ENCODE measurements at regions of chr19 and their contacts with region 1.

Region 1: DNA sequence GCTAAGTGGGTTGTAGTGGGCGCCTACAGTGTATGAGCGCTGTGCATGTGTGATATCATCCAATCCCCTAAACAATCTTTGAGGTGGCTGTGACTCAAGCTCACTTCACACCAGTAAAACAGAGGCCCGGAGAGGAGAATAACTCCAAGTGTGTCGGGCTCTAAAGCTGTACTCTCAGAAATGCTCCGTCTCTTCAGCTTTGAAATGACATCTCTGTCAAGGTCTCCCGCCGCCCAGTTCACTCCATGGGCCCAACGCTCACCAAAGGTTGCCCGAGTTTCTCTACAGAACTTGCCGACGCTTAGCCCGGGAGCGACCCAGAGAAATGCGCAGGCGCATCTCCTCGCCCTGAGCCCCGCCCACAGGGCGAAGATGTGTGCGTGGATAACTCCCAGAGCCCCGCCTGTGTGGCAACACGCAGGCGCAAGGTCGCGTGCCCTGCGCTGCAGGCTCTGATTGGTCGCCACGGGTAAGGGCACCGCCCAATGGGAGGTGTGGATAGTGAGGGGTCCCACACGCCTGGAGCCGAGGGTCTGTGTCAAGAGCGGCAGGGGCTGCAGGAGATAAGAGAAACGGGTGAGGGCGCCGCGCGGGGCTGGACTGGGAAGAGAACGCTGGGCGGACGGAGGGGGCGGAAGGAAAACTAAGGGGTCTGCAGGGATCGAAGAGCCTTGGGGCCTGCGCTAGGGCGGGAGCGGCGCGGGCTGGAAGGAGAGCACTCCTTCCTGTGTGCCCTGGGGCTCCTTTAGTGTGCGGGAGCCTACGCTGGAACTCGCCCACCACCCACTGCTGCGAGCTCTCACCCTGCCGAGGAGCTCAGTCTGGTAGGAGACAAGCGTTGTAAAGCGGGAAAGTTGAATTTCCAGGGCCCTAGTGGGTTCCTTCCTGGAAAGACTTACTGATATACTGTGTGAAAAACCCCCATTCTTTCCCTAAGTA is at the start of gene ZNF526:
- DNase-seq: peak; percentile 93
- ATAC-seq: peak; percentile 83
- H3K4me3 Mint-ChIP-seq: peak within 1 kb of the TSS; percentile 99
- H3K27ac Mint-ChIP-seq: peak within 1 kb of the TSS; percentile 93
- H3K4me1 Mint-ChIP-seq: peaks cover 55% of the 10 kb centered on the region
- H3K27me3 Mint-ChIP-seq: no peaks in the 10 kb centered on the region
- CTCF ChIP-seq: no peak
- total RNA-seq, gene ZNF526: 19.6 and 22.7 TPM in 2 replicates

Region 2: DNA sequence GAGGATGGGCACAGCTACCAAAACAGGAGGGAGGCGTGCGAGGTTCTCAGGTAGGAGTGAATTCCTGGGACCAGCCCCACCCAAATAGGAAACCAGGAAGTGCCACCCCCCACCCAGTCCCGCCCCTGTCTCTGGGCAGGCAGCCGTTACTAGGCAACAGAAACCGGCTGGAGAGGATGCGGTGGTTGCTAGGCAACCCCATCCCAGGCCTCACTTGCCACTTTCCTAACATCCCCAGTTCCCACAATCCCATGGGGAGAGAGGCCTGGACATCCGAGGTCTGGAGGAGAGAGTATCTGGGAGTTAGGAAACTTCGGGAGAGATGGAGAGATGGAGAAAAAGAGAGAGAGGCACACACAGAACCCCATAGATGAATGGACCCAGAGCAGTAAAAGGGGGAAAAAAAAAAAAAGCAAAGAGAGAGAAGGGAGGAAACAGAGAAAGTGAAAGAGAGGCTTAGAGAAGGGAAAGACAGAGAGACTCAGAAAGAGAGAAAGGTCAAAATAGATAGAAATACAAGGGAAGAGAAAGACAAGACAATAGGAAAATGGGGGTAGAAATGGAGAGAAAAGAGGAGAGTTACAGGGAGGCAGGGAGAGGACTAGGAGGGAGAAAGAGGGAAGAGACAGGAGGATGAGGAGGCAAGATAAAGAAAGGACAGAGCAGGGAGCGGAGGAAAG is 153.9 kb before region 1 on chr19:
- CTCF ChIA-PET with region 1: no interaction called
- POLR2A ChIA-PET with region 1: no interaction called
- intact Hi-C with region 1: no loop called
- DNase-seq: no peak
- ATAC-seq: no peak
- H3K4me3 Mint-ChIP-seq: no peak overlapping the region
- H3K27ac Mint-ChIP-seq: no peak overlapping the region
- H3K4me1 Mint-ChIP-seq: no peaks in the 10 kb centered on the region
- H3K27me3 Mint-ChIP-seq: peaks cover 7% of the 10 kb centered on the region
- CTCF ChIP-seq: no peak

Region 3: DNA sequence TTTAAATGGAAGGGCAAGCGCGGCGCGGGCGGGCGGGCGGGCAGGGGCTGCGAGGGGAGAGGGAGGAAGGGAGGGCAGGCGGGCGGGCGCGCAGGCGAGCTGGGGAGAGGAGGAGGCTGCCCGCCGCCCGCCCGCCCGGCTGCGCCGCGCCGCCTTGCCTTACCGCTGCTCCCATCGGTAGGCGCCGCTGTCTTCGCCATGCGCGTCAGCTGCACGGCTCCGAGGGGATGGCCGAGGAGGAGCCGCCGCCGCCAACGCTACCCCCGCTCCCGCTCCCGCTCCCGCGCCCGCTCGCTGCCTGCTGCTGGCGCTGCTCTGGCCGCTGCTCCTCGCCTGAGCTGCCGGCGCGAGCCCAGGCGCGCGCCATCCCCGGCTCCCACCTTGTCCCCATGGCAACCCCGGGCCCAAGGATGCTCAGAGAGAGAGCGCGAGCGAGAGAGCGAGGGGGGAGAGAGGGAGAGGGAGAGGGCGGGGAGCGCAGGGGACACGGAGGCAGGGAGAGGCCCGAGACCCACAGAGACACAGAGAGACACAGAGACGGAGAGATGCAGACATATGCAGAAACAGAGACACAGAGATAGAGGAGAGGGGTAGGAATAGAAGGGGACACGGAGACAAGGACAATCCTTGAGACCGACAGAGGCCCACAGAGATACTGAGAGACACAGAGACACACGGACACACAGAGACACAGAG is 42.9 kb before region 1 on chr19:
- CTCF ChIA-PET with region 1: no interaction called
- POLR2A ChIA-PET with region 1: interaction called, 3 read pairs
- intact Hi-C with region 1: loop called (anchors 5 kb)
- DNase-seq: peak; percentile 71
- ATAC-seq: peak; percentile 91
- H3K4me3 Mint-ChIP-seq: no peak overlapping the region
- H3K27ac Mint-ChIP-seq: no peak overlapping the region
- H3K4me1 Mint-ChIP-seq: peaks cover 15% of the 10 kb centered on the region
- H3K27me3 Mint-ChIP-seq: peaks cover 20% of the 10 kb centered on the region
- CTCF ChIP-seq: no peak

Region 4: DNA sequence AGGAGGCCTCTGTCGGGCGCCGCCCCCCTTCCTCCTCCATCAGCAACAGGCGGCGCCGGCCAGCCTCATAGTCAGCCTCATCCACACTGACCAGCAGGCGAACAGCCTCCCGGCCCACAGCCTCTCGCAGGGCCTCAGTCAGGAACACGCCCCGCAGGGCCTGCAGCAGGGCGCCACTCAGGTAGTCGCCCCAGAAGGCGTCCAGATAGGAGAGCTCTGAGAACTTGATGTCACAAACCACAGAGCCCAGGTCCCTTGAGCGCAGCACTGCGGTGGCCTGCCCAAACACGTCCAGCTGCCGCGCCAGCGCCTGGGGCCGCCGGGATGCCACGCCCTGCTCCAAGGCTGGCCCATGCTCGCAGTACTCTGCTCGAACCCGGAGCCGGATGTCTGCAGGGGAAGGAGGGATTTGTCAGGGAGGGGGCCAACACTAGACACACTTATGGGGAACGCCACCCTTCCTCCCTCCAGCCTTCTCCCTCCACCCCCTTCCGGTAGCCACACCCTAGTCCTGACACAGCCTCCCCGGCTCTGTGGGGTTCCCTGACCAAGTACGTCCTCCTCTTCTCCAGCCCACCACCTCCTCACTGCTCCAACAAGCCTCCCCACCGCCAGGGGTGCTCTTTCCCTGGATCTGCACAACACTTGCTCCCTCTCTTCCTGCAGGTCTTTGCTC is 20.5 kb before region 1 on chr19:
- CTCF ChIA-PET with region 1: interaction called, 5 read pairs
- POLR2A ChIA-PET with region 1: interaction called, 31 read pairs
- intact Hi-C with region 1: loop called (anchors 1 kb)
- DNase-seq: peak; percentile 47
- ATAC-seq: peak; percentile 44
- H3K4me3 Mint-ChIP-seq: peak overlapping the region; percentile 68
- H3K27ac Mint-ChIP-seq: peak overlapping the region; percentile 93
- H3K4me1 Mint-ChIP-seq: peaks cover 87% of the 10 kb centered on the region
- H3K27me3 Mint-ChIP-seq: no peaks in the 10 kb centered on the region
- CTCF ChIP-seq: no peak

Region 5: DNA sequence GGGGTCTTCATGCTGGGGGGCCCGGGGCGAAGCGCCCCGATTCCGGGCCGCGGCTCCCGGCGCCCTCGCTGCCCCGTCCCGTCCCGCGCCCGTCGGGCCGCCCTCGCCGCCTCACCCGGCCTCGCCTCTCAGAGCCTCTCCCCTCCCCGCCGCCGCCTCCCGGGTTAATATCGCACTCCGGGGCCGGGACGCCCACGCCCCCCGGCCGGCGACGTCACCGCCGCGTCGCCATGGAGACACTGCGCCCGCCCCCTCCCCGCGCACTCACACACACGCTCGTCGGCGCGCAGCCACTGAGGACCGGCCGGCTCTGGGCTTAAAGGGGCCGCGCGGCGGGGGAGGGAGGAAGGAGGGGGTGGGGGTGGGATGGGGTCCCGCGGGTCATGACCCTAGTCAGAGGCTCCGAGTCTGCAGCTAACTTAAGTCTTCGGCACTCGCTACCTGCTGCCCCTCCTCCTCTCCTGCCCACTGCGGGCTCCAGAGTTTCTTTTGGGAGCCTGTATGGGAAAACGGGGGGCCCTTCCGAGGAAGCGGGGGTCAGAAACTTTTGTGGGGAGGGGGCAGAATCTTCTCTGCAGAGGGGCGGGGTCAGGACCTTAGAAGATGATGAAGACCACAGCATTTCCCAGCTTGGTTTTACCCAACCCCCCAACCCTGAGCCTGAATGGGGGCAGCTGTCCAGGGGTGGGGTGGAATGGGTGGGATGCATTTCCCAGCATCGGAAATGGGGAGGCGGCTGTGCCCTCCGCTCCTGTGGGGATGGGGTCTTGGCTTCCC is 35.1 kb after region 1 on chr19 and contains the start of gene ERF:
- CTCF ChIA-PET with region 1: no interaction called
- POLR2A ChIA-PET with region 1: no interaction called
- intact Hi-C with region 1: loop called (anchors 1 kb)
- DNase-seq: peak; percentile 97
- ATAC-seq: peak; percentile 76
- H3K4me3 Mint-ChIP-seq: peak within 1 kb of the TSS; percentile 84
- H3K27ac Mint-ChIP-seq: peak within 1 kb of the TSS; percentile 73
- H3K4me1 Mint-ChIP-seq: peaks cover 28% of the 10 kb centered on the region
- H3K27me3 Mint-ChIP-seq: peaks cover 5% of the 10 kb centered on the region
- CTCF ChIP-seq: no peak
- total RNA-seq, gene ERF: 47.9 and 48.1 TPM in 2 replicates

Region 6: DNA sequence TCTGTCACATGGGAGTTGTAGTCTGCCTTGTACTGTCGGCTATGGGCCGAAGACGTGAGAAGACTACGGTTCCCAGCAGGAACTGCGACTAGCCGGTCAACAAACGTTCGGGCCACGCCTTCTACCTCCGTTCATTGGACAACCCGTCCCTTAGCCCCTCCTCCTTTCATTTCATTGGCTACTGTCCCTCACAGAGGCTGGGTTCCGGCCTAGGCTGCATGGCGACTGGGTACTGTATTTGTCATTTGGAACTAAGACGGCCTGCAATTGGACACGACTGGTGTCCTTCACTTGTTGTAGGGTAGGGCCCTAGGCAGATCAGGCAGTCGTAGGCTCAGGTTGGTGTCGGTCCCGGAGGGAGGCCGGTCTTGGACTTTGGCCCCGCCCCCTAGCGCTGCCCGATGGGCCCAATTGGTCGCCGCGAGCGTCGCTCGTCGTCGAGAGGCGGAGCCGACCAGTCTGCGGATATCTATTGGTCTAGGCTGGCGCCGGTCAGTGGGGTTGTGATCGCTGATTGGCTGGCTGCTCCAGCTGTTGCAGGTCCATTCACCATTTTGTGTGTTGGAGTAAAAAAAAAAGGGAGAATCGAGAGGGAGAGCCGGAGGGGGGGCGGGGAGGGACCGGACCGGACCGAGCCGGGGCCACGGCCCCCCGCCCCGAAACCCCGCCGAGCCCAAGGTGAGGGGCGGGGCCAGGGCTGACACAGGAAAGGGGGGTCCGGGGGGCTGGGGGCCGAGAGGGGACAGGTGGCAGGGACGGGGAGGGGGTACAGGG is 48.8 kb after region 1 on chr19 and contains the start of gene CIC:
- CTCF ChIA-PET with region 1: no interaction called
- POLR2A ChIA-PET with region 1: interaction called, 5 read pairs
- intact Hi-C with region 1: loop called (anchors 1 kb)
- DNase-seq: peak; percentile 95
- ATAC-seq: peak; percentile 81
- H3K4me3 Mint-ChIP-seq: peak within 1 kb of the TSS; percentile 88
- H3K27ac Mint-ChIP-seq: peak within 1 kb of the TSS; percentile 94
- H3K4me1 Mint-ChIP-seq: peaks cover 31% of the 10 kb centered on the region
- H3K27me3 Mint-ChIP-seq: no peaks in the 10 kb centered on the region
- CTCF ChIP-seq: no peak
- total RNA-seq, gene CIC: 85.4 and 96.5 TPM in 2 replicates

Region 7: DNA sequence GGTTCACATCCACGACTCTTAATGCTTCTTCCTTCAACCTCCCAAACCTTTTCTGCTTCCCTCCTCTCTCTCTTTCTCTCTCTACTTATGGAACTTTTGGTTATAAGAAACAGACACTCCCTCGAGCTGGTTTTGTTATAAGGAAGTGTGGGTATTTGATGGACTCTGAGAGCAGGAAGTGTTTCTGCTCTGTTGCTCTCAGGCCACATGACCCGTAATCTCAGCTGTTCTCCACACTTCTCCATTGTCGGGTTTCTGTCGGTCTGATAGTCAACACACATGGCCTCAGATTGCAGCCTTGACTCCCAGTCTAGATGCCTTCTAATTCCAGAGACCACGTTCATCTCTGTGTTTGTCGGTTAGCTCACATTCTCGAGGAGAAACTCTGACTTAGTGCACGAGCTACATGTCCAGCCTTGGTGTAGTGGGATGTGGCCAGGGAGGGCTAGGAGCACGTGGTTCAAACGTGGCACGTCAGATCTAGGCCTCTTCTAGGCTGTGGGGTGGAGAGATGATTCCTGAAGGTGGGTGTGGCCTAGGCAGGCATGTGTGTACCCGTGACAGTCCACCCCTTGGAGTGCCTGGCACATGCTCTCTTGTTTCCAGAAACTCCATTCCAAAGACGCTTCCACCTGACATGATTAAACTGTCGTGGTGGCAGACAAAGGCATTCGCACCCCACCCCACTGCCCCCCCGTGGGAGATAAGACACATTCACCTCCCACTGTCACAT is 143.7 kb after region 1 on chr19:
- CTCF ChIA-PET with region 1: no interaction called
- POLR2A ChIA-PET with region 1: no interaction called
- intact Hi-C with region 1: no loop called
- DNase-seq: no peak
- ATAC-seq: peak; percentile 34
- H3K4me3 Mint-ChIP-seq: peak overlapping the region; percentile 64
- H3K27ac Mint-ChIP-seq: peak overlapping the region; percentile 88
- H3K4me1 Mint-ChIP-seq: peaks cover 46% of the 10 kb centered on the region
- H3K27me3 Mint-ChIP-seq: no peaks in the 10 kb centered on the region
- CTCF ChIP-seq: no peak

Region 8: DNA sequence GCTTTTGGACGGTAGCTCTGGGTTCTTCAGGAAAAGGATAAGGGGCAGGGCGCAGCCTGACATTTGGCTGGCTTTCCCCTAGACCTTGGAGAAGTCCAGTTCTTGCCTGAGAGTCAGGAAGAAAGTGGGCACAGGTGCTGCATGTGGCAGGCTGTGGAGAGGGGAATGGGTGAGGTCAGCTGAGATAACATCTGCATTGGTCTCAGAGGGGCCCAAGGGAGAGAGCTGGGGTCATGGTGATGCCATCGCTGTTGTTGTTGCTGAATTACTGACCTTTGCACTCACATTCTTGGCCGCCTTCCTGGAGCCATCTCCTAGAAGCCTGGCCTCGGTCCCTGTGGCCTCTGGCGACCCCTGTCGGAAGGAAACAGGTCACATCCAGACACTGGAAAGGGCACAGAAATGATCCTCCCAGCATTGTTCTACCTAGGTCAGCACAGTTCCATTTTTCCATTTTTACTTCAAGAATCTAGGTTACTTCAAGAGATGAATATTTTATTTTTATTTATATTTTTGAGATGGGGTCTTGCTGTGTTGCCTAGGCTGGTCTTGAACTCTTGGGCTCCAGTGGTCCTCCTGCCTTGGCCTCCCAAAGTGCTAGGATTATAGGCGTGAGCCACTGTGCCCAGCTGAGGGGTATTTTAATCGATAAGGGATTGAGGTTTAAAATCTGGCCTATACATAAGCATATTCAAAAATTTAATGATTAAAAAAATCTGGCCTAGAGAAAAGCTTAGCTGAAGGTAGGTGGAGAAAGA is 213.6 kb after region 1 on chr19:
- CTCF ChIA-PET with region 1: no interaction called
- POLR2A ChIA-PET with region 1: no interaction called
- intact Hi-C with region 1: no loop called
- DNase-seq: no peak
- ATAC-seq: peak; percentile 66
- H3K4me3 Mint-ChIP-seq: no peak overlapping the region
- H3K27ac Mint-ChIP-seq: no peak overlapping the region
- H3K4me1 Mint-ChIP-seq: peaks cover 4% of the 10 kb centered on the region
- H3K27me3 Mint-ChIP-seq: no peaks in the 10 kb centered on the region
- CTCF ChIP-seq: no peak